Adrenal gland (tissue), 19 donors: ENCODE measurements at regions of chr1 and their contacts with region 1.

Region 1: DNA sequence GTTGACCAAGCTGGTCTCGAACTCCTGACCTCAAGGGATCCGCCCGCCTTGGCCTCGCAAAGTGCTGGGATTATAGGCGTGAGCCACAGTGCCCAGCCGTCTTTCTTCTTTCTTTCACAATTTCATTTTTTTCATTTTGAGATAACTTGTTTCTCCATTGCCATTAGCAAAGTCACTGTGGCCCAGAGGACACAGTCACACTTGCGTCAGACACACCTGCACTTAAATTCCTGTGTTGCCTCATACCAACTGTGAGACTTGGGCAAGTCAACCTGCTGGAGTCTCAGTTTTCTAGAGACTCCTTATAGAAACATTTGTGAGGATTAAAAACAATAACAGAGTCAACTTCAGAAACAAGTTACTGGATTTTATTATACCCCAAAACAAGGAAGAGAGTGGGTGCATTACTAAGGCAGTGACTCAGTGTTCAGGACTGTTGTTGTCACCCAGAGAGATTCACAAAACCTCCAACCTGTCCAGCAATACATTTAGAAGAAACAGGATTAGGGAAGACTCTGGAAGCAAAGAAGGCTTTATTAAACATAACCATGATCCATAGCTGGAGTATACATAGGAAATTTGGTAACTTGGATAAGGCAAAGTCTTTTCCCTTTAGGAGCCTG is 2.6 kb downstream of the TEDDM1 start:
- DNase-seq: no peak
- H3K4me3 ChIP-seq: no peak overlapping the region
- H3K27ac ChIP-seq: no peak overlapping the region
- H3K4me1 ChIP-seq: peaks cover 0 to 7% of the 10 kb centered on the region in 2 donors
- H3K27me3 ChIP-seq: no peaks in the 10 kb centered on the region
- CTCF ChIP-seq: no peak
- POLR2A ChIP-seq: no peak

Region 2: DNA sequence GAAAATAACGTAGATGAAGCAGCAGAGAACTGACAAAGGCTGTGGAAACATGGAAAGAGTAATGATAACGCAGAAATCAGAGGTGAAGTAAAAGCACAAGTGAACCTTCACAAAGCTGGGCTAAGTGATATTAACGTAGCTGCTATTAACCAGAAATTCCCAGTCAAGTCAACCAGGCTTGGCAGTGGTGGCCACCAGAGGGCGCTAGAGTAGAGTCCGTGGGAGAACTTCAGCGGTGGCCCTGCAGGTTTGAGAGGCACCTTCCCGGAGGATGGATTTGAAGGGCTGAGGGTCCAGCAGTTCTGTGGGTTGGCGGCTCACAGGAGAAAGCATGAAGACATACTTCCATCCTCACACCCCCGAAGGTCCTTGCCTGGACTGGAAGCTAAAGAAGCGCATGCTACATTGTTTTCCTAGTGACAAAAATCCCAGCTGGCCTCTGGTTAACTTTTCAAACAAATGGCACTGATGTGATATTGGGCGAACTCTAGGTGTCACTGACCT is 254.7 kb before region 1 on chr1:
- intact Hi-C with region 1: loop called (anchors 2 kb)
- DNase-seq: peak; percentile 82 to 97 (median 91)
- H3K4me3 ChIP-seq: no peak overlapping the region
- H3K27ac ChIP-seq: peak overlapping the region in 4 of 5 donors; percentile 39 to 95 (median 74)
- H3K4me1 ChIP-seq: peaks cover 4 to 21% of the 10 kb centered on the region in 2 donors
- H3K27me3 ChIP-seq: no peaks in the 10 kb centered on the region
- CTCF ChIP-seq: peak; percentile 90 to 98 (median 96)
- POLR2A ChIP-seq: peak in 1 of 2 donors; percentile 20